Natural killer cell (primary cell): ENCODE measurements at regions of chr2 and their contacts with region 1.

Region 1: DNA sequence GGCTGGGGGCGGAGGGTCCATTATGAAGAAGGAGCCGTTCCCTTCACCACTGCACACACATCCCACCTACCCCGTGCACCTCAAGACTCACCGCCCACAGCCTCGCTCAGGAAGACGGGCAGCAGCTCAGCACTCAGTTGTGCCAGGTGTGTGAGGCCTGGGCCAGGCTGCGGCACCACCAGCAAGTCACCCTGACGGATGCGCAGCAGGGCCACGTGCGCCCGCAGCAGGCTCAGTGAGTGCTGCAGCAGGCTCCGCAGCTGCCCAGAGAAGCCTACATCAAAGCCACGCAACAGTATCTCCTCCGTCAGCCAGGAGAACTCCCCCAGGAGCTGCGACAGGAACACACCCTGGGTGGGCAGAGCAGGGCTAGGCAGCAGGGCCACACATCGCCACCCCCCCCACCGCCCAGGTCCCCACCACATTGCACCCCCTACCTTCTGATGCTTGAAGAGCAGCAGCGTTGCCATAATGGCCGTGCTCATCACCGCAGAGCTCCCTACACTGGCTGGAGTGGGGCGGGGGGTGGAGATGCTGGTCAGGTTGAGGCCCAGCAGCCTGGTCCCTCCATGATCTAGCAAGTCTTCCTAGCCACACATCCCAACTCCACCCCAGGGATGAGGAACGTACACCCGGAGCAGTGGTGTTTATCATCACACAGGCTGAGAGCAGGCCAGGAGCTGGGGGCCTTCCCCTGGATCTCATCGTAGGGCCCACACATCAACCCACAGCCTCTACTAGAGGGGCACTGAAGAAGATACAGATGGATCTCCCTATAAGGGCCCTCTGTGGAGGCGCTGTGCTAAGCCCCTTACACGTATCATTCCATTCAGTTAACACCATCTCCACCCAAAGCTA is 10.2 kb downstream of the GPAT2 start:
- DNase-seq: no peak
- ATAC-seq: no peak
- H3K4me3 ChIP-seq: no peak overlapping the region
- H3K4me3 Mint-ChIP-seq: no peak overlapping the region
- H3K27ac ChIP-seq: no peak overlapping the region
- H3K27ac Mint-ChIP-seq: no peak overlapping the region
- H3K4me1 ChIP-seq: no peaks in the 10 kb centered on the region
- H3K4me1 Mint-ChIP-seq: peaks cover 0 to 6% of the 10 kb centered on the region in 2 donors
- H3K27me3 ChIP-seq: no peaks in the 10 kb centered on the region
- H3K27me3 Mint-ChIP-seq: no peaks in the 10 kb centered on the region
- CTCF ChIP-seq: no peak

Region 2: DNA sequence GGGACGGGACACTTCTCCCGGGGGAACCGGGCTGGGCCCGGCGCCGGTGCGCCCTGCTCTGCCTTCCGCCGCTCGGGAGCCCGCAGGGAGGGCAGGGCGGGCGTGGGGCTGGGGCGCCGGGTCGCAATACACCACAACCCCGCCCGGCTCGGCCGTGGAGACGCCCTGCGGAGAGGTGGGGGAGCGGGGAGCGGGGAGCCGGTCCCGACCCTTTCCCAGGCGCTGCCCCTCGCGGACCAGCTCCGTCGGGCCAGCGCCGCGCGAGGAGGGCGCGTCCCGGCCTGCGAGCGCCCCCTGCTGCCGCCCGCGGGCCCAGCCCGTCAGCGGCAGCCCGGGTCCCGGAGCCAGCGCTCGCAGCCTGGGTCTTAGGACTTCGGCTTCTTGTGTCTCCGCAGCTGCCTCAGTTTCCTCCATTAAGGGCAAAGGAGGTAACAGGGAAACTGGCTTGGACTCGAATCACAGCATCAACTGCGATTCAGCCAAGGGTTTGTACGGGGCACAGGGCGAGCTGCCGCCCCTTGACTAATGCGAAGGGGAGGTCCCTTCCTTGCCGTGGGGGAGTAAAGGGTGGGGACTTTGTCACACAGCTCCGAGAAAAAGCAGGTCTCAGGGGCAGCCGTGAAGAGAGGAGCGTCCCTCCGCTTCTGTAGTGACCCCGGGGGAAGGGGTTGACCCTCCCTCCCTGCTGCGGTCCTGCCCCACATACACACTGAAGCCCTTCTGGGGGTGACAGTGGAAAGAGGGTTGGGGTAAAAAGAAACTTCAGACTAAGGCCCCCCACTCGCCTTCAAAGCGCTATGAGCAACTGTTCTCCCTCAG is 92.5 kb after region 1 on chr2:
- intact Hi-C with region 1: loop called (anchors 10 kb)
- DNase-seq: peak; percentile 69 to 84
- ATAC-seq: peak; percentile 83 to 87 (median 86)
- H3K4me3 ChIP-seq: no peak overlapping the region
- H3K4me3 Mint-ChIP-seq: peak overlapping the region; percentile 21
- H3K27ac ChIP-seq: no peak overlapping the region
- H3K27ac Mint-ChIP-seq: no peak overlapping the region
- H3K4me1 ChIP-seq: peaks cover 8% of the 10 kb centered on the region
- H3K4me1 Mint-ChIP-seq: peaks cover 9 to 36% of the 10 kb centered on the region in 2 donors
- H3K27me3 ChIP-seq: peaks cover 9% of the 10 kb centered on the region
- H3K27me3 Mint-ChIP-seq: peaks cover 40% of the 10 kb centered on the region in 2 donors
- CTCF ChIP-seq: peak; percentile 97

Region 3: GRCh38 chr2:96174251-96175144 is 149.9 kb after region 1 on chr2:
- intact Hi-C with region 1: loop called (anchors 10 kb)
- DNase-seq: peak; percentile 80 to 90
- ATAC-seq: peak; percentile 94 to 100 (median 100)
- H3K4me3 ChIP-seq: no peak overlapping the region
- H3K4me3 Mint-ChIP-seq: no peak overlapping the region
- H3K27ac ChIP-seq: no peak overlapping the region
- H3K27ac Mint-ChIP-seq: peak overlapping the region in 1 of 2 donors; percentile 19
- H3K4me1 ChIP-seq: peaks cover 7% of the 10 kb centered on the region
- H3K4me1 Mint-ChIP-seq: peaks cover 8% of the 10 kb centered on the region in 2 donors
- H3K27me3 ChIP-seq: no peaks in the 10 kb centered on the region
- H3K27me3 Mint-ChIP-seq: peaks cover 0 to 2% of the 10 kb centered on the region in 2 donors
- CTCF ChIP-seq: peak; percentile 91

Region 4: DNA sequence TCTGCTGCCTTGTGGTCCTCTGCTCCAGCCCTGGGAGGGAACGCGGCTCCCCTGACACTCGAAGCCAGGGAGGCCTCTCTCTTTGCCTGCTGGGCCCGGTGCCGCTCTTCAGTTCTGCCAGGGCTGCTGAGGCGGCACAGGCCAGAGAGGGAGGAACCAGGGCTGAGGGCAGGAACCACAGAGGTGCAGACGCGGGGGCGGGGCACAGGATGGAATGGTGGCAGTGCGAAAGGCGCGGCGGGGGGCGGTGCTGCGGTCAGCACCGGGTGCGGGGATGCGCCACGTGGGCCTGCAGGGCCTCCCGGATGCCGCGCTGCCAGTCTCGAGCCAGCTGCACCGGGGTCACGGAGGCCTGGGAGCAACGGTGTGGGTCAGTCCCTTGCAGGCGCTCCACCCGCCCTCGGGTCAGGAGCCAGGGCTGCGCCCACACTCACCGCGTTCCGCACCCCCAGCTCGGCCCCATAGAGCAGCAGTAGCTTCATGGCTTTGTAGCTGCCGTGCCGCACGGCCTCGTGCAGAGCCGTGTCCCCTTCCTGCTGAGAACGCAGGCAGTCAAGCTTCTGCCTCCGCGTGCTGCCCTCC is 814.8 kb after region 1 on chr2:
- intact Hi-C with region 1: loop called (anchors 10 kb)
- DNase-seq: peak; percentile 72 to 89
- ATAC-seq: peak; percentile 94 to 97 (median 96)
- H3K4me3 ChIP-seq: peak overlapping the region; percentile 28
- H3K4me3 Mint-ChIP-seq: peak overlapping the region; percentile 85
- H3K27ac ChIP-seq: peak overlapping the region; percentile 51
- H3K27ac Mint-ChIP-seq: peak overlapping the region; percentile 29 to 51
- H3K4me1 ChIP-seq: peaks cover 27% of the 10 kb centered on the region
- H3K4me1 Mint-ChIP-seq: peaks cover 11 to 25% of the 10 kb centered on the region in 2 donors
- H3K27me3 ChIP-seq: no peaks in the 10 kb centered on the region
- H3K27me3 Mint-ChIP-seq: no peaks in the 10 kb centered on the region
- CTCF ChIP-seq: no peak